Activated CD8-positive, alpha-beta T cell treated with anti-CD3 and anti-CD28 coated beads for 36 hours (primary cell): ENCODE measurements at regions of chrX and their contacts with region 1.

Region 1: GRCh38 chrX:5113128-5113527 is 1115.5 kb downstream of the NLGN4X start:
- DNase-seq: no peak
- ATAC-seq: no peak
- H3K4me3 Mint-ChIP-seq: no peak overlapping the region
- H3K27ac Mint-ChIP-seq: no peak overlapping the region
- H3K4me1 Mint-ChIP-seq: no peaks in the 10 kb centered on the region
- H3K27me3 Mint-ChIP-seq: no peaks in the 10 kb centered on the region
- CTCF ChIP-seq: no peak

Region 2: DNA sequence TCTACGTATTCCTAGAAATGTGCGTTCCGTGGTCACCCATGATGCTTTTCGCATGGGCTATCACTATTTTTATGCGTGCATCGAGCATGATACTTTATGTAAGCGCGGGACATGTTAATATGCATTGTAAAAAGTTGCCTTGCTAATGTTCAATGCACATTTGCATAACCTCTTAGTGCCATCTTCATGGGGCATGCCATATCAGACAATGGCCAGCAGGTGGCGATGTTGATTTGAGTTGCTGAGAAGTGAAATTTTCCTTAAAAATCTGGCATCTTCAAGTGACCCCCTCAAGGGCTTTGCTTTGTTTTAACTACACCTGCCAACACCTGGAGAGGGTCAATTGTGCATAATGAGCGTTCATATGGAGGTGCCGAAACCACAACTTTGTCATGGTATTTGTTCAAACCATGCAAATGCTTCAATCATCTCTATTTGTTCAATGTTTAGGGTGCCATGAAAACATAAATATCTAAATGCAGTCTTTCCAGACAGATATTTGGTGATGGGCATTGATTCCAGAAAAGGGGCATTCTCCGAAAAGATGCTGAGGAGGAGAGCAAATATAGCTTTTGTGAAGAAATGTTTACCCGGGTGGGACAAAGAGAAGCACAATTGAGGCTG is 565.8 kb before region 1 on chrX:
- CTCF ChIA-PET with region 1: no interaction called
- POLR2A ChIA-PET with region 1: no interaction called
- intact Hi-C with region 1: loop called (anchors 10 kb)
- DNase-seq: peak; percentile 33
- ATAC-seq: no peak
- H3K4me3 Mint-ChIP-seq: no peak overlapping the region
- H3K27ac Mint-ChIP-seq: no peak overlapping the region
- H3K4me1 Mint-ChIP-seq: no peaks in the 10 kb centered on the region
- H3K27me3 Mint-ChIP-seq: no peaks in the 10 kb centered on the region
- CTCF ChIP-seq: peak; percentile 73